GM13977 (cell line): ENCODE measurements at regions of chr7 and their contacts with region 1.

Region 1: DNA sequence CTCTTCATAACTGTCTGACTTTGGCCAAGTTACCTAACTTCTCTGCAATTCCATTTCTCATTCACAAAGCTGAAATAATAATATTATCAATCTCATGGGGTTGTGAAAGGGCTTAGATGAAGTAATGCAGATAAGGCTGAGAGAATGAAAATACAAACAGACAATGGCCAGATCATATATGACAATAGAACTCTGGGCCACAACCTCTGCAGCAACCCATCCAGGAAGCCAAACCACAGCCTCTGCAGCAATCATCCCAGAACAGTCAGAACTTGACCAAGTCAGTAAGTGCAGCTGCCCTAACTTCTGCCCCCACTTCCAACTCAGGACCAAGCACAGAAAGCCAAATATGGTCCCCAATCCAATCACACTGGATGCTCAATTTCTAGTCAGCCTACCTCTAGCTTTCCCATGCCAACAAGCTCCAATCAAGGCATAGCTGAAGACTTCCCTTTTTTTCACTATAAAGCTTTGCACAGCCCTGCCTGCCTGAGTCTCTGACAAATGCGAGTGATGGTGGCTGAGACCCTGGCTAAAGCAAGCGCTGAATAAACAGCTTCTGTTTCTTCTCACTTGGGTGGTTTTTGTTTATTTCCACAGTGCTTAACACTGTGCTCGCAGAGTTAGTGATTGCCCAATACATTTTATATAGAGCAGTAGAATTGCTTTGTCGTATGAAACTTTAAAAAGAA is 34.8 kb upstream of the TNPO3 start:
- DNase-seq: peak; percentile 42
- CTCF ChIP-seq: no peak

Region 2: GRCh38 chr7:128904381-128905197 is 185.1 kb before region 1 on chr7:
- in situ Hi-C with region 1: loop called (anchors 10 kb)
- DNase-seq: peak; percentile 90
- CTCF ChIP-seq: peak; percentile 63

Region 3: GRCh38 chr7:129298268-129298893 is 208.7 kb after region 1 on chr7:
- in situ Hi-C with region 1: no loop called
- DNase-seq: peak; percentile 62
- CTCF ChIP-seq: peak; percentile 78